T-cell (primary cell): ENCODE measurements at regions of chr9 and their contacts with region 1.

Region 1: GRCh38 chr9:110058304-110058953 is 149.5 kb downstream of the C9orf152 start:
- DNase-seq: peak in 30 of 35 experiments; percentile 14 to 67 (median 38)
- ATAC-seq: peak in 2 of 4 experiments; percentile 59 to 67
- H3K4me3 ChIP-seq: no peak overlapping the region
- H3K4me3 Mint-ChIP-seq: no peak overlapping the region
- H3K27ac ChIP-seq: no peak overlapping the region
- H3K27ac Mint-ChIP-seq: no peak overlapping the region
- H3K4me1 ChIP-seq: peaks cover 0 to 4% of the 10 kb centered on the region in 2 experiments
- H3K4me1 Mint-ChIP-seq: peaks cover 11 to 20% (median 15%) of the 10 kb centered on the region in 3 donors
- H3K27me3 ChIP-seq: no peaks in the 10 kb centered on the region
- H3K27me3 Mint-ChIP-seq: no peaks in the 10 kb centered on the region

Region 2: DNA sequence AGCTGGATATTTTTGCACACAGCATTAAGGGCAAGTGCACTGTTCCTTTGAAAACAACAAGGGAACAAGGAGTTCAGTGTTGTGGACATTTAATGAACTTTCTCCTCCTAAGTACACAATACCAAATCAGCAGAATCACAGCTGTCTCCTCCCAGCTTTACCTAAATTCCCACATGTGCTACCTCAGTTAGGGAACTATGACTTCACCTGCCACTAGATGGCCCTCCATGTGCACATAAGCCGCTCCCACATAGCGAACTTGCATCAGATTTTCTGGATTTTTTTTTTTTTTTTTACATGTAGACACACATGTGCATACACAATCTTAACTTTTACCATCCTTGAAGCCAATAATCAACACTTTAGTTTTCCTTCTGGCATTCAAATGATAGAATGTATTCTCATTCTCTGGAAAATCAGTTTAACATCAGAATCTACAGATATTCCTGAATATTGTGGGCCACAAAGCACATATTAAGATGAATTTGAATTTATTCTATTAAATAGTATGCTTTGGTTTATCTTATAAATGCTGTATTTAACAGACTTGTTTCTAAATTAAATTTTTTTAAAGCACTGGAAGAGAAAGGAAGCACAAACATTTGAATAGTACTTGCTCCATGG is 154.8 kb before region 1 on chr9:
- CTCF ChIA-PET with region 1: interaction called, 10 to 42 read pairs
- POLR2A ChIA-PET with region 1: no interaction called
- DNase-seq: peak in 34 of 35 experiments; percentile 9 to 78 (median 42)
- ATAC-seq: peak; percentile 52 to 79 (median 66)
- H3K4me3 ChIP-seq: no peak overlapping the region
- H3K4me3 Mint-ChIP-seq: no peak overlapping the region
- H3K27ac ChIP-seq: no peak overlapping the region
- H3K27ac Mint-ChIP-seq: no peak overlapping the region
- H3K4me1 ChIP-seq: no peaks in the 10 kb centered on the region
- H3K4me1 Mint-ChIP-seq: peaks cover 2 to 14% (median 11%) of the 10 kb centered on the region in 3 donors
- H3K27me3 ChIP-seq: no peaks in the 10 kb centered on the region
- H3K27me3 Mint-ChIP-seq: peaks cover 2 to 5% of the 10 kb centered on the region in 2 donors